GM18951 (cell line): ENCODE measurements at regions of chr1 and their contacts with region 1.

Region 1: DNA sequence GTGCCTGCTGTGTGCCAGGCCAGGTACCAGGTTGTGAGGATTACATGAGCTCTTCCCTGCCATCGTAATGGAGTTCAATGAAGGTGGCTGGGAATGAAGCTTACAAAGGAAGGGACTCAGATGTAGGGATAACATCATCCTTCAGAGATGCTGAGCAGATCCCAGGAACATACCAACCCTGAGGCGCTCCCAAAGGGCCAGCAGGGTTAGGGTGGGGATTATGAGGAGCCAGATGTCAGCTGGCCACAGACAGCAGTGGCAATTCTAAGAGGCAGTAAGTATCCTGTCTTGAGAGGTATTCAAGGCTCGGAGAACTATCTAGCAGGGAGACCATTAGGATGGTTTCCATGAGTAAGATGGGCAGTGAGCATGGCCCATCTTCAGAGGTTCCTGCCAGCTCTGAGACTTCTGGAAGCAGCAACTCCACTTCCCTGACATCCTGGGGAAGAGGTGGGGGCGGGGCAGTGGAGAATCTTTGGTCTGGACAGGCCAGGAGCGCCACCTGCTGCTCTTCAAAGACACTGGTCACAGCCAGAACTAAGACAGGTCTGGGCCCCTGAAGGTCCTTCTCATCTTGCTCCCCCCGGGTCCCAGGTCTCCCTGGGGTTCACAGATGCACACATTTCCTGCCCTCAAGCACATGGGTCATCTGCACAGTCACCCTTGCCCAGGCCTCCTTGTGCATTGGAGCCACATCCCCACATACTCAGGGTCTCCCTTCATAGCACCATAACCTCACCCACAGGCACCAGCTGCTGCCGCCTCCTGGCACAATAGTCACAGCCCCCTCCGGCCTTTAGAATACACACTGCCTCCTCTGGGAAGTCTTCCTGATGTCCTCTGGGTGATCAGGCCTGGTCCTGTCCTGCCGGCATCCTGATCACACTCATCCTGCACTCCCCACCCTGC is 2.7 kb upstream of the SDC3 start:
- POLR2A ChIP-seq: no peak

Region 2: DNA sequence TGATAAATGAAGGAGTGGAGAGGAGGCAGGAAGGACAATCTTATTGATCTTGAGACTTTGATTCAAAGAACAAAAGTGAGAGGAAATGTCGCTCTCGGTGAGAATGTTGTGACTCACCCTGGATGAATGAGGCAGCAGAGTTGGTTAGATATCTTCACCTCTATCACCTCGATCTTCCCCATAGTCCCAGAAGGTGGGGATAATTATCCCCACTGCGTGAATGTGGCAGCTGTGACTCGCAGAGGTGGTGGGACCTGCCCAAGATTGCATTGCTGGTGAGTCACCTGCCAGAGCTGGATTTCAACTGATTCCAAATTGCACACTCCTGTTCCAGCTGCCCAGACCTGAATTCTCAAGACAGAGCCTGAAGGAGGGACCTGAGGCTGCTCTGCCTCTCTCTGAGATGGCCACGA is 293.0 kb before region 1 on chr1:
- in situ Hi-C with region 1: no loop called
- POLR2A ChIP-seq: no peak

Region 3: DNA sequence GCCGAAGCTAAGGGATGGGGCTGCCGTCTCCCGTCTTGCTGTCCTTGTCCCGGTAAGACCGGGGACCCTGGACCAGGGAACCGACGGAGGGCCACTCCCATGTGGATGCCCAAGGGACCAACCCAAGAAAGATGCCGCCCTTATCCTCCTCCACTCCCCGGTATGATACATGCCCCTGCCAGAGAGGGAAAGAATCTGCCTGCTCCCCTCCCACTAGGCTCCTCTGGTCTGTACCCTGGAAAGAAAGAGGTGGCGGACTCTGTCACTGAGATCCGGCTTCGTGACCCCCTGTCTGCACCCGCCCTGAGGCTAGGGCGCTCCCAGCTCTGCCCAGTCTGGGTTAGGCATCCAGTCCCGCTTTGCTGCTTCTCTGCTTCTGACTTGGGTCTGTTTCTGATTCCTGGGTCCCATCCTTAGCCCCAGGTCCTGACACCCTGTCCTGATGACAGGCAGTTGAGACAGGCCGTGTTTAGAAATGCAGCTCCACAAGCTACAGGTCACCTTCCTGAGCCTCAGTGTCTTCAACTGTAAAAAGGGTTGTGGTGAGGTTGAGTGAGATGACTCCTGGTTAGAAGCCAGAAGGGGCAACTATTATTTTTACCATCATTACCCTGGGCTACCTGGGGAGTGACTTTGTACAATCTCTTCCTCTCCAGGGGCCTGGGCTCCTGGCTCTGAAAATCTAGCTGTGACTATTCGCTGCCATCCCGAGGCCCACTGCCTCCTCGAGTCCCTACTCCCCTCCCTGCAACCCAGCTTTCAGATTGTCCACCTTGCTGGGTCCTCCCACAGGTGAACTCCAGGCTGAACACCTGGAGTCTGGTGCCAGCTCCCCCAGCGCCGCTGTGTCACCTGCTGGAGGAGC is 191.7 kb before region 1 on chr1:
- in situ Hi-C with region 1: loop called (anchors 10 kb)
- POLR2A ChIP-seq: no peak

Region 4: GRCh38 chr1:30801771-30802198 is 109.5 kb before region 1 on chr1:
- in situ Hi-C with region 1: loop called (anchors 5 kb)
- POLR2A ChIP-seq: no peak

Region 5: DNA sequence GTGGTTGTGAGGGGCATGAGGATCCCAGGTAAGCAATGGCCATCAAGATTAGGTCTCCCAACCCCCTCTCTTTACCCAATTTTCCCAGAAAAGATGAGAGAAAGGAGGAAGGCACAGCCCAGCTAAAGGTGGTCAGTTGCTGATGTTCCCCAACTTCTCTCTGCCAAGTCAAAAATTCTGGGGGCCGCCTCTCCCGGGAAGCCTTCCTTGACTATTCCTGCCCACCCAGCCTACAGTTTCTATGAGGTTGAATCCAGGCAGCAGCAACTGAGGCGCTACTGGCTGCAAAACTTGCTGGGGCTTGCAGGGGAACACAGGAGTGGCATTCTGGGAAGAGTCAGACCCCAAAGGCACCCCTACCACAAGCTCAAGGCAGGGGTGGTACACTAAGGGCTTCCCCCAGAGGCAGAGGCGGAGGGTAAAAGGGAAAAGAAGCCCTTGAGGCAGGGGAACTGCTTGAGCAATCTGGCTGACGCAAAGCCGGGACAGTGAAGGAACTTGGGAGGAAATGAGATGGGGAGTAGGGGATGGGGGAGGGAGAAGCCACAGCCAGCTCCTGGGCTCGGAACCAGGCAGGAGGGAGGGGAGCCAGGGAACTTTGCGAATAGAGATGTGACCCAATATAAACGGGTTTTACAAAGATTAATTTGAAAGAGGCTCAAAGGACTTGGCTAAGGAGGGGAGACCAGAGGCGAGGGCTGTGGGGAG is 33.9 kb before region 1 on chr1:
- in situ Hi-C with region 1: loop called (anchors 5 kb)
- POLR2A ChIP-seq: no peak